A673 (cell line): ENCODE measurements at regions of chr12 and their contacts with region 1.

Region 1: DNA sequence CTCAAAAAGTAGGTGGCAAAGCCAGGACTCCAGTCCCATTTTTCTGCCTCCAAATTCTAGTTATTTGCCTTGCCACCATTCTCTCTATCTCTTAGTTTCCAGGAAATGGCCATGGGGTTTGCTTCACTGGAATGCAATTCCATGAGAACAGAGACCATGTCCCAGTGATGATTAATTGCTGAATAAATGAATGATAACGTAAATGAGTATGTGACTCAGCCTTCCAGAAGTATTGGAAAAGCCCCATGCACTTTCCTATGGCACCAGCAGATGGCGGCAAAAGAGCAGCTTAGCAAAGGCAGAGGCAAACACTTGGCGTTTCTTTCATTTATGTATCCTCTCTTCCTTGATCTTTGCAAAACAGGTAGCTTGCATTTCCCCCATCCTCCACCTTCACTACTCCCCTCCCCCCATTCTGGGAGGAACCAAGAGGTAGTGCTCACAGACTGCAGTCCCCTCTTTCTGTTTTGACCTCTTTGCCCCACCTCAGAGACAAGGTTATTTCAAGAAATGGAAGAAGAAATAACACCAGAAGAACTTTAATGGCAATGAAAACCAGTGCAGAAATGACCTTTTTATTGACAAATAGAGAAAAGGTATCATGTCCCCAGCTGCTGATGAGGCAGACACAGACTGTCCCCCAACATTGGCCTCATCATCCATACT is 21.3 kb downstream of the TBX3 start:
- DNase-seq: peak; percentile 72
- H3K4me3 ChIP-seq: no peak overlapping the region
- H3K27ac ChIP-seq: no peak overlapping the region
- H3K4me1 ChIP-seq: no peaks in the 10 kb centered on the region
- H3K27me3 ChIP-seq: peaks cover under 1% of the 10 kb centered on the region
- CTCF ChIP-seq: peak; percentile 81

Region 2: GRCh38 chr12:115752913-115753726 is 1090.5 kb after region 1 on chr12:
- CTCF ChIA-PET with region 1: no interaction called
- POLR2A ChIA-PET with region 1: no interaction called
- intact Hi-C with region 1: loop called (anchors 1 kb)
- DNase-seq: peak; percentile 62
- H3K4me3 ChIP-seq: no peak overlapping the region
- H3K27ac ChIP-seq: no peak overlapping the region
- H3K4me1 ChIP-seq: no peaks in the 10 kb centered on the region
- H3K27me3 ChIP-seq: peaks cover 41% of the 10 kb centered on the region
- CTCF ChIP-seq: peak; percentile 65

Region 3: GRCh38 chr12:115916910-115917668 is 1254.4 kb after region 1 on chr12:
- CTCF ChIA-PET with region 1: interaction called, 6 read pairs
- POLR2A ChIA-PET with region 1: no interaction called
- intact Hi-C with region 1: loop called (anchors 2 kb)
- DNase-seq: peak; percentile 27
- H3K4me3 ChIP-seq: no peak overlapping the region
- H3K27ac ChIP-seq: no peak overlapping the region
- H3K4me1 ChIP-seq: no peaks in the 10 kb centered on the region
- H3K27me3 ChIP-seq: no peaks in the 10 kb centered on the region
- CTCF ChIP-seq: peak; percentile 84